Activated naive CD4-positive, alpha-beta T cell treated with anti-CD3 and anti-CD28 coated beads for 36 hours (primary cell): ENCODE measurements at regions of chr4 and their contacts with region 1.

Region 1: DNA sequence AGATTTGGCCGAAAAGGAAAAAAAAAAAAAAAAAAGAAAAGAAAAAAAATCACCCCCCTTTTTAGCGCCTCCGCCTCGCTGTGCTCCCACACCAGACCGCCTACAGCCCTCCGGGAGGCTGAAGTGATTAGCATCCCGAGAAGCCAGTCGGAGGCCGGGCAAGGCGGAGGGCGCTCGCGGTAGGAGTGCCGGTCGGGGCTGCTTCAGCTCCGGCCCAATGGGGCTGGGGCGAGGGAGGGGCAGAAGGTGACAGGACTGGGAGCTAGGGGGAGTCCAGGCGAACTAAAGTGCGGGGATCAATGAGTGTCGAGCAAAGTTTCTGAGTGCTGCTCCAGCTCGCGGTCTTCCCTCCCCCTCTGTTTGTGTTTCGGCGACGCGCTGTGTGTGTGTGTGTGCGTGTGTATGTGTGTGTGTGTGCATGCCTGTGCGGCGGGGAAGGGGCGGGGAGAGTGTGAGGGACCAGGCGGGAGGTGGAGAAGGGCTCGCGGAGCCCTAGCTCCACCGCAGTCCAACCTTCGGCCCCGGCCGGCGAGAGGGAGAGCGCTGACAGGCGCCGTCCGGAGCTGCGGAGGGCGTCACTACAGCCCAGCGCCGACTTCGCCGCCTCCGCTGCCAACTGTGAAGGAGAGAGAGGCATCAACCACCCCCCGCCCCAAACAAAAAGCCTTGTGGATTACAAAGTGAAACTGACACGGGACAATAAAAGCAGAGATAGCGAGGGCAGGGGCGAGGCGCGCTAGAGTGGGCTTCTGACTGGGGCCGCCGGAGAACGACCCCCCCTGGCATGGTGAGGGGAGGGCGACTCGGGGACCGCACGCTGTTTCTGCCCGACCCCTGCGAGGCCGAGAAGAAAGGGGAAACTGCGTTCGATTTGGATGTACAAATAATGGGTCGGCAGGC is at the start of gene FAT4:
- DNase-seq: peak; percentile 56
- H3K4me3 Mint-ChIP-seq: peak within 1 kb of the TSS; percentile 75
- H3K27ac Mint-ChIP-seq: no peak within 1 kb of the TSS
- H3K4me1 Mint-ChIP-seq: peaks cover 33% of the 10 kb centered on the region
- H3K27me3 Mint-ChIP-seq: peaks cover 72% of the 10 kb centered on the region
- total RNA-seq, gene FAT4: not detected

Region 2: DNA sequence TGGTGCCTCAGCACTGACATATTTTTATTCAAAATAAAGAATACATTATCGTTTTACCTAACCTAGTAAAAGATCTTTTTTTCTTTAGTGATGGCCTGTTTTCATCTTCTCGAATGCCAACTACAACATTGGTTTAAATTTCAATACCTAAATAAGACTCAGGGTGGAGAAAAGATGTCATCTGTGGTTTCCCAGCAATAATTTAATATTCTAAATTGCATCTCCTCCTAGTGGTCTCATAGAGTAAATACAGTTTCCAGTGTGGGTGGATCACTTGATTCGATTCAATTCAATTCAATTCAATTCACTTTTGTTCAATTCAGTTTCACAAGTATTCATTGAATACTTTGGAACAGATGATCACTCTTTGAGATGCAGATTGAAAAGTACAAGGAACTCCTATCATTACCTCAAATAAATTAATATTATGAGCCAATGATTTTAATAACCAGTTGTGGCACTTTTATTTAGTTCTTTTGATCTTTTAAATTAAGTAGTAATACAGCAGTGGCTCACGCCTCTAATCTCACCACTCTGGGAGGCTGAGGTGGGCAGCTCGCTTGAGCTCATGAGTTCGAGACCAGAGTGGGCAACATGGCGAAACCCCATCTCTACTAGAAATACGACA is 427.0 kb after region 1 on chr4:
- CTCF ChIA-PET with region 1: no interaction called
- intact Hi-C with region 1: loop called (anchors 5 kb)
- DNase-seq: no peak
- H3K4me3 Mint-ChIP-seq: no peak overlapping the region
- H3K27ac Mint-ChIP-seq: no peak overlapping the region
- H3K4me1 Mint-ChIP-seq: no peaks in the 10 kb centered on the region
- H3K27me3 Mint-ChIP-seq: no peaks in the 10 kb centered on the region

Region 3: DNA sequence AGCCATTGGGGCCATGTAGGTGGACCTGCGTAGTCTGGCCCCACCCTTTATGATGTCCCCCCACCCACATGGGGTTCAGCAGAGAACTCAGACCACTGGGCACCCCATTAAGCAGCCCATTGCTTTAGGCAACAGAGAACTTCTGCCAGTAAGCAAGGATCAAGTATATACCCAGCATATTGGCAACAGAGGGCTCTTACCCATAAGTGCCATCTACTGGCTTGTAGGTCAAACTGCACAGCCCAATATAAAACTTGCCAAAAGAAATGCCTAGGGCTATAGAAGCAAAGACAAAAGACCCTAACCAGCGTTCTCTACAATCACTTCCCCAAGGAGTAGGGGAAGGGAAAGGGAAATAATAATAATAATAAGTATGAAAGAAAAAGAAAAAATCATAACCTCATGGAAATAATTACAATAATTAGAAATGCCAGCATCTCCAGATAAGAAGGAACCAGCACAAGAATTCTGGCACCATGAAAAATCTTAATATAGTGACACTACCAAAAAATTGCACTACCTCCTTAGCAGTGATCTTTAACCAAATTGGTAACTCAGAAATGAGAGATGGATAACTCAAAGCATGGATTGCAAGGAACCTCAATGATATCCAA is 1090.5 kb after region 1 on chr4:
- CTCF ChIA-PET with region 1: no interaction called
- intact Hi-C with region 1: loop called (anchors 1 kb)
- DNase-seq: no peak
- H3K4me3 Mint-ChIP-seq: no peak overlapping the region
- H3K27ac Mint-ChIP-seq: no peak overlapping the region
- H3K4me1 Mint-ChIP-seq: no peaks in the 10 kb centered on the region
- H3K27me3 Mint-ChIP-seq: no peaks in the 10 kb centered on the region

Region 4: DNA sequence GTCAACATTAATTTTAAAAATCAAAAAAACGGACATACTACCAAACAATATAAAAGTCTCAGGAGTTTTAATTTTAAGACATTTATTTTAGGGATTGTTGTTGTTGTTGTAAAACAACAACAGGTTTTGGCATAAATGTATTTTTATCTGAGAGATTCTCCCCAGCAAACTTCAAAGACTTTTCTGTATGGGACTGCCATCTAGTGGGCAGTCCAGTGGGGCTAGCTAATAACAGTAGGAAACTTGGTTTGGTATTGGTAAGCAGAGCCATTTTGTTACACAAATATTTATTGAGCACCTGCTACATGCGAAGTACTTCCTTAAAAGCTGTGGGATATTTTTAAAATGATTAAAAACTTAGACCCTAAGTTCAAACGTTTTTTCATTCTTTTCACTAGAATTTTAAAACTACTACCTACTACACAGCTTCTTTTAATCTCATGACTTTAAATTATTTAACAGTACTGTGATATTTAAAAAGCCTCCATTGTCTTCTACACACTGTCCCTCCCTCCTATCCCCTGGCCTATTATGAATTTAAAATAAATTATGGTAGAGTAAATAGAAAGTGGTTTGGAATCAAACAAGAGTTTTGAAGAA is 1289.4 kb after region 1 on chr4:
- CTCF ChIA-PET with region 1: no interaction called
- intact Hi-C with region 1: loop called (anchors 5 kb)
- DNase-seq: peak; percentile 5
- H3K4me3 Mint-ChIP-seq: no peak overlapping the region
- H3K27ac Mint-ChIP-seq: no peak overlapping the region
- H3K4me1 Mint-ChIP-seq: no peaks in the 10 kb centered on the region
- H3K27me3 Mint-ChIP-seq: no peaks in the 10 kb centered on the region